ENCODE measurements at regions of chr4 and their contacts with region 1.

Region 1: DNA sequence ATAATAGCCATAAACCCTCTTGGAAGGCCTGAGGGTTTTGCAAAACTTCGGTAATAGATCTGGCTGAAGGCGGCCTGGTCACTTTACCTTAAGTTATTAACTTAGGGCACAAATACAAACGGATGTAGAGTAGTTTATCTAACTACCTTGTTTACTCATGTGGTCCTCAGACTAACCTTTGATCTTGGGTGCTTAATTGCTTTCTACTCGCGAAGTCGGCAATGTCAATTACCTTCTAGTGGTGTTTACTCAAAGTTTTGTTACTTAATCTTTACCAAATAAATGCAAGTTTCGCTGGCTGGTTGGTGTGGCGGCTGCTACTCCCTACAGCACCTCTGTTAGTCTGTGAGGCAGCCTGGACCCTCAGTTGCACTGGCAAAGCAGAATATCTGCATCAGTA is 8.9 kb upstream of the ZNF141 start:
- DNase-seq: no peak
- ATAC-seq: no peak
- H3K4me3 Mint-ChIP-seq: no peak overlapping the region
- H3K27ac Mint-ChIP-seq: no peak overlapping the region
- H3K4me1 Mint-ChIP-seq: no peaks in the 10 kb centered on the region
- H3K27me3 Mint-ChIP-seq: no peaks in the 10 kb centered on the region; the same call in 1 of the 2 replicates
- CTCF ChIP-seq: no peak

Region 2: GRCh38 chr4:304969-305680 is 23.6 kb before region 1 on chr4 and contains the start of gene ZNF732:
- CTCF ChIA-PET with region 1: interaction called, 21 read pairs
- POLR2A ChIA-PET with region 1: interaction called, 4 read pairs
- DNase-seq: peak; percentile 89
- ATAC-seq: peak; percentile 99
- H3K4me3 Mint-ChIP-seq: peak within 1 kb of the TSS; percentile 95
- H3K27ac Mint-ChIP-seq: peak within 1 kb of the TSS; percentile 95
- H3K4me1 Mint-ChIP-seq: peaks cover 20% of the 10 kb centered on the region
- H3K27me3 Mint-ChIP-seq: peaks cover 10% of the 10 kb centered on the region; the same call in 1 of the 2 replicates
- CTCF ChIP-seq: no peak
- total RNA-seq, gene ZNF732: 28.1 to 33.8 TPM (median 30.2 TPM) in 3 replicates